ENCODE measurements at regions of chr16 and their contacts with region 1.

Region 1: GRCh38 chr16:46973207-46973995 is at the start of gene DNAJA2:
- DNase-seq: peak; percentile 86 to 97 (median 90)
- ATAC-seq: peak; percentile 90
- H3K4me3 ChIP-seq: peak within 1 kb of the TSS; percentile 86
- H3K4me3 Mint-ChIP-seq: peak within 1 kb of the TSS; percentile 93
- H3K27ac ChIP-seq: peak within 1 kb of the TSS; percentile 93 to 94
- H3K27ac Mint-ChIP-seq: peak within 1 kb of the TSS; percentile 91
- H3K4me1 ChIP-seq: peaks cover 48% of the 10 kb centered on the region
- H3K4me1 Mint-ChIP-seq: peaks cover 61% of the 10 kb centered on the region
- H3K27me3 ChIP-seq: no peaks in the 10 kb centered on the region
- H3K27me3 Mint-ChIP-seq: no peaks in the 10 kb centered on the region
- CTCF ChIP-seq: no peak
- total RNA-seq, gene DNAJA2: 80.8 to 81.4 TPM

Region 2: DNA sequence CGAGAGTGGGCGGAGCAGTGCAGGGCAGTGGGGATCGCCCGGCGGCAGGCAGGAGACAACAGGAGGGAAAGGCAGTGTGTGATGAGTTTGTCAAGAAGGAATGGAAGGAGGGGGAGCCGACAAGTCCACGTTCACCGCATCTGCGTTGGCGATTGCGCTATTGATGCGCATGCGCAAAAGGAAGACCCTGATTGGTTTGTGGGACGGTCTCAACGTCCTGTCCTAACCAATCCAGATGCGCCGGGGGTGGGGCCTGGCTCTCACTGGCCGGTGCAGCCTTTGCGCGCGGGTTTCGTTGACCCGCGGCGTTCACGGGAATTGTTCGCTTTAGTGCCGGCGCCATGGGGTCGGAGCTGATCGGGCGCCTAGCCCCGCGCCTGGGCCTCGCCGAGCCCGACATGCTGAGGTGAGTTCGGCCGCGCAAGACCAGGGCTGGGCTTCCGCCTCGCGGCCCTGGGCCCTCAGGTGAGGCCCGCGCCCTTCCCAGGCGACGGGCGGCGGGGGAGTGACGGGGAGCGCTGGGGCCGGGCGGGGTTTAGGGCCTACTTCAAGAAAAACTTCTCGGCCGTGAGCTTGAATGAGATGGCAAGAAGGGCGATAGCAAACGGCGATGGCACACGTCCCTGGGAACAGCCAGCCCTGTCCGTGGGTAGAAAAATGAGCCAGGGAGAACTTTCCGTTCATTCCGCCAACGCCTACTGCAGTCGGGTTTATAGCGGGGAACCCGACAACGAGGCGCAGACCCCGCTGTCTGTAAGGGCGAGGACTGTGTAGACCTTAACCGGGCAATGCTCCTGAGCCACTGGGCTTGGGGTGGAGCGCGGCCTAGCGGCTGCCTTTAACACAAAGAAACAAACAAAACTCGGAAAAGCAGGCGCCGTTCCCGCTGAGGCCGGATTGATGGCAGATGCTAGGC is 283.8 kb before region 1 on chr16 and contains the start of gene ORC6:
- CTCF ChIA-PET with region 1: no interaction called
- POLR2A ChIA-PET with region 1: no interaction called
- intact Hi-C with region 1: loop called (anchors 2 kb)
- DNase-seq: peak; percentile 92 to 97 (median 96)
- ATAC-seq: peak; percentile 72
- H3K4me3 ChIP-seq: peak within 1 kb of the TSS; percentile 94
- H3K4me3 Mint-ChIP-seq: no peak within 1 kb of the TSS
- H3K27ac ChIP-seq: peak within 1 kb of the TSS; percentile 91 to 98
- H3K27ac Mint-ChIP-seq: no peak within 1 kb of the TSS
- H3K4me1 ChIP-seq: peaks cover 23% of the 10 kb centered on the region
- H3K4me1 Mint-ChIP-seq: peaks cover 33% of the 10 kb centered on the region
- H3K27me3 ChIP-seq: no peaks in the 10 kb centered on the region
- H3K27me3 Mint-ChIP-seq: no peaks in the 10 kb centered on the region
- CTCF ChIP-seq: no peak
- total RNA-seq, gene ORC6: 3.7 to 3.8 TPM

Region 3: GRCh38 chr16:46830902-46831647 is 142.3 kb before region 1 on chr16 and contains the start of gene C16orf87:
- CTCF ChIA-PET with region 1: no interaction called
- POLR2A ChIA-PET with region 1: interaction called, 11 read pairs
- intact Hi-C with region 1: loop called (anchors 2 kb)
- DNase-seq: peak; percentile 81 to 96 (median 90)
- ATAC-seq: peak; percentile 91
- H3K4me3 ChIP-seq: peak within 1 kb of the TSS; percentile 87
- H3K4me3 Mint-ChIP-seq: peak within 1 kb of the TSS; percentile 98
- H3K27ac ChIP-seq: peak within 1 kb of the TSS; percentile 45 to 61
- H3K27ac Mint-ChIP-seq: peak within 1 kb of the TSS; percentile 89
- H3K4me1 ChIP-seq: peaks cover 11% of the 10 kb centered on the region
- H3K4me1 Mint-ChIP-seq: peaks cover 36% of the 10 kb centered on the region
- H3K27me3 ChIP-seq: no peaks in the 10 kb centered on the region
- H3K27me3 Mint-ChIP-seq: no peaks in the 10 kb centered on the region
- CTCF ChIP-seq: no peak
- total RNA-seq, gene C16orf87: 20.6 to 22.6 TPM

Region 4: DNA sequence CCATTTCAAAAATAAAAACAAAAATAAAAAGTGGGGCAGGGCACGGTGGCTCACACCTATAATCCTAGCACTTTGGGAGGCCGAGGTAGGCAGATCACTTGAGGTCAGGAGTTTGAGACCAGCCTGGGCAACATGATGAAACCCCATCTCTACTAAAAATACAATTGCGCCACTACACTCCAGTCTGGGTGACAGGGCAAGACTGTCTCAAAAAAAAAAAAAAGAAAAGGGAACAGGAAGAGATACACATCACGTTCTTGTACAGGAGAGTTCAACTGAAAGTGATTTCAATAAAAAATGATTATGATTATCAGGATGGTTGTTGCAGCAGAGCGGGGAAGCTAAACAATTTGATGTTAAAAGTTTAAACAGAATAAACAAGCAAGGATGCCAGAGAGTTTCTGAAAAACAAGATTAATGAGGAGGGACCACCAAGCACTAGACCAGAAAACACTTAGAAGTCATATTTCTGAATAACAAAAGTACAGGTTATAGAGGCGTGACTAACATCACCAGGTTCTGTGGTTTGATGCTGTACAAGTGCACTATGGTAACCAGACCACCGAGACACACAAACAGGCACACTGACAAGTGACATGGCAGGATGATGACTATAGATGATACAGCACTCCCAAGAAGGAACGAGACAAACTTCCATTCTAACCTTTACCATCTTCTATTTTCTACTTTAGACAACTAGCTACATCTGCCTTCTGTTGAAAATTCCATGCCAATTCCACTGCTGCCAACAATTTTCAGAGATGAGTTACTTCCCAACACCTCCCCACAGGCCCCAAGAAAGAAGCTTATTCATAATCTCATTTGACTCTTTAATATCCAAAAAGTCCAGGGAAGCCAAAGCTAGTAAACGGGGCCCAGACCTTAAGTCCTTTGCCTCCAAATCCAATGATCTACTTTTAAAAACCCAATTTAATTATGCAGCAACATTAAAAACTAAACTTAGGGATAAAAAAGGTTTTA is 11.7 kb before region 1 on chr16:
- CTCF ChIA-PET with region 1: interaction called, 4 read pairs
- POLR2A ChIA-PET with region 1: interaction called, 21 read pairs
- intact Hi-C with region 1: no loop called
- DNase-seq: peak in 3 of 14 experiments; percentile 43 to 58 (median 48)
- ATAC-seq: peak; percentile 84
- H3K4me3 ChIP-seq: no peak overlapping the region
- H3K4me3 Mint-ChIP-seq: no peak overlapping the region
- H3K27ac ChIP-seq: no peak overlapping the region
- H3K27ac Mint-ChIP-seq: peak overlapping the region; percentile 88
- H3K4me1 ChIP-seq: peaks cover 5% of the 10 kb centered on the region
- H3K4me1 Mint-ChIP-seq: peaks cover 33% of the 10 kb centered on the region
- H3K27me3 ChIP-seq: no peaks in the 10 kb centered on the region
- H3K27me3 Mint-ChIP-seq: no peaks in the 10 kb centered on the region
- CTCF ChIP-seq: no peak

Region 5: DNA sequence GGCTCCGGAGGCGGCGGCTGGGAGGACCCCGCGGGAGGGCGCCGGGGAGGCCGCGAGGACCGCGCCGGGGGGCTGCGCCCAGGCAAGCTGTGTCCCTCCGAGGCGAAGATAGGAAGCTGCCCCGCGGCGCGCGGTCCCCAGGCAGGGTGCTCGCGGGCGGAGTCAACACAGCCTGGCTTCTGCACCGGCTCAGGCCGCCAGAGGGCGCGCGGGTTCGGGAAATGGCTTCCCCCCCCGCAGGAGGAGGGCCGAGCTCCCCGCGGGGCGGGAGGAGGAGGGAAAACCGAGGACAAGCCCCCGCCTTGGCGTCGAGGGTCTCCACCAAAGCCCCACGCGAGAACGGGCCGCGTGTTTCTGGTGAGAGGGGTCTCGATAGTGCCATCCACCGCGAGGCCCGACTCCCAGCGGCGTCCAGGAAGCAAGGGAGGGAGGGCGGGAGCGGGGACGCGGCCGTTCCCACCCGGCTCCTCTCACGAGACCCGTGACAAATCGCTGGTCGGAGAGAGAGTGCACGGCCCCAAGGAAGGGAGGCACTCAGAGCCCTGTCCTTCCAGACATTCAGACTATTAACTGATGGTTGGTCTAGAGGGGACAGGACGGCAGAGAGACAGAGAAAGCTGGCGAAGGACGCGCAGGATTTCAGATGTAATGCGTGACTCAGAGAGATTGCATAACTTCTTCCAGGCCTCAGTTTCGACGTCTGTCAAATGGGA is 64.5 kb after region 1 on chr16:
- CTCF ChIA-PET with region 1: interaction called, 24 read pairs
- POLR2A ChIA-PET with region 1: interaction called, 28 read pairs
- intact Hi-C with region 1: loop called in 1 of 2 experiments (anchors 2 kb)
- DNase-seq: peak; percentile 76 to 94 (median 88)
- ATAC-seq: peak; percentile 97
- H3K4me3 ChIP-seq: peak overlapping the region; percentile 74
- H3K4me3 Mint-ChIP-seq: peak overlapping the region; percentile 67
- H3K27ac ChIP-seq: no peak overlapping the region
- H3K27ac Mint-ChIP-seq: no peak overlapping the region
- H3K4me1 ChIP-seq: peaks cover 13% of the 10 kb centered on the region
- H3K4me1 Mint-ChIP-seq: no peaks in the 10 kb centered on the region
- H3K27me3 ChIP-seq: no peaks in the 10 kb centered on the region
- H3K27me3 Mint-ChIP-seq: no peaks in the 10 kb centered on the region
- CTCF ChIP-seq: peak; percentile 93

Region 6: DNA sequence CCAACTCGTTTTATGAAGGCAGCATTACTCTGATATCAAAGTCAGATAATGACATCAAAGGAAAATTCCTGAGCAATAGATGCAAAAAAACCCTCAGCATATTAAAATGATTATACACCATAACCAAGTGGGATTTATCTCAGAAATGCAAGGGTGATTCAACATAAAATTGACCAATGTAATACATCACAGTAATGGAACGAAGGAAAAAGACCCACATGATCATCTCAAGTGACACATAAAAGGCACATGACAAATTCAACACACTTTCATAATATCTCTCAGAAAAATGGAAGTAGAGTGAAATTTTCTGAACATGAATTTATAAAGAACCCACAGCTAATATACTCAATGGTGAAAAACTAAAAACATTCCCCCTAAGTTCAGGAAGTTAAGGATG is 368.7 kb after region 1 on chr16:
- CTCF ChIA-PET with region 1: no interaction called
- POLR2A ChIA-PET with region 1: no interaction called
- intact Hi-C with region 1: no loop called
- DNase-seq: no peak
- ATAC-seq: no peak
- H3K4me3 ChIP-seq: no peak overlapping the region
- H3K4me3 Mint-ChIP-seq: no peak overlapping the region
- H3K27ac ChIP-seq: no peak overlapping the region
- H3K27ac Mint-ChIP-seq: no peak overlapping the region
- H3K4me1 ChIP-seq: no peaks in the 10 kb centered on the region
- H3K4me1 Mint-ChIP-seq: peaks cover 8% of the 10 kb centered on the region
- H3K27me3 ChIP-seq: no peaks in the 10 kb centered on the region
- H3K27me3 Mint-ChIP-seq: no peaks in the 10 kb centered on the region
- CTCF ChIP-seq: no peak

Region 7: DNA sequence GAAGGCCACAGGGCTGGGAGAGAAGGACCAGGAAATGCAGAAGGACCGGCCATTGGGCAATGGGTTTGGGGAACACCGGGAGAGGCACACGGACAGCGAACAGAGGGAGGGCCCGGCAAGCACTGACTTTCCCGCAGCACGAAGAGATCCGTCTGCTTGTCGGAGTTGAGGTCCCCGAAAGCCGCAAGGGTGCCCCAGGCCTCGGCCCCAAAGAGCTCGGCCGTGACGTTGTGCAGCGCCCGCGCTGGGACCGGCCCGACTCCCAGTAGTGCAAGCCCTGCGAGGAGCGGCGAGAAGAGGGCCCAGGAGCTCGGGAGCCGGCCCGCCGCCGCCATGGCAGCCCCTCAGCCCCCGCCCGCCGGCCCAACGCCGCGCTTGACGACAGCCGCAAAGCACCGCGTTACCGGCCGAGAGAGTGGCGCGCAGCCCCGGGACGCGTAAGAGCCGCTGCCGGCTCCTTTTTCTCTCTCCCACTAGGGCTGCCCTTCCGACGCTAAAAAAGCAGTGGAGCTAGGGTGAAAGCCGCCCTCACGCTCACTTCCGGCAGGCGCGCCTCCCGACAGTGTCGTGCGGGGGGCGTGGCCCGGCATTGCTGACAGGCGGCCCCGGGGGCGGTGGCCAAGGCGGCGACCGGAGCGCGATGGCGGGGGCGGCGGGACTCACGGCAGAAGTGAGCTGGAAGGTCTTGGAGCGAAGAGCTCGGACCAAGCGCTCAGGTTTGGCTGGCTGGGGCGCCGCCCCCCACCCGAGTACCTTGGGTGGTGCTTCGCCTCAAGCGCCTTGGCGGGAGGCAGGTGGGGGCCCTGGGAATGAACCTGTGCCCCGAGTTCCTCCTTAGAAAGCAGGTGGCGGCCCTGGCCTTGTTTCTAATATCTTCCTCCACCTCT is 487.6 kb after region 1 on chr16 and contains the starts of genes ITFG1 and PHKB:
- CTCF ChIA-PET with region 1: no interaction called
- POLR2A ChIA-PET with region 1: interaction called, 27 read pairs
- intact Hi-C with region 1: loop called in 1 of 2 experiments (anchors 5 kb)
- DNase-seq: peak; percentile 89 to 98 (median 94)
- ATAC-seq: peak; percentile 96
- H3K4me3 ChIP-seq: peak within 1 kb of the TSS; percentile 79
- H3K4me3 Mint-ChIP-seq: peak within 1 kb of the TSS; percentile 89
- H3K27ac ChIP-seq: peak within 1 kb of the TSS; percentile 87 to 93
- H3K27ac Mint-ChIP-seq: peak within 1 kb of the TSS; percentile 87
- H3K4me1 ChIP-seq: peaks cover 26% of the 10 kb centered on the region
- H3K4me1 Mint-ChIP-seq: peaks cover 70% of the 10 kb centered on the region
- H3K27me3 ChIP-seq: no peaks in the 10 kb centered on the region
- H3K27me3 Mint-ChIP-seq: no peaks in the 10 kb centered on the region
- CTCF ChIP-seq: no peak
- total RNA-seq, gene ITFG1: 18.0 to 18.5 TPM
- total RNA-seq, gene PHKB: 28.8 to 31.3 TPM

Region 8: DNA sequence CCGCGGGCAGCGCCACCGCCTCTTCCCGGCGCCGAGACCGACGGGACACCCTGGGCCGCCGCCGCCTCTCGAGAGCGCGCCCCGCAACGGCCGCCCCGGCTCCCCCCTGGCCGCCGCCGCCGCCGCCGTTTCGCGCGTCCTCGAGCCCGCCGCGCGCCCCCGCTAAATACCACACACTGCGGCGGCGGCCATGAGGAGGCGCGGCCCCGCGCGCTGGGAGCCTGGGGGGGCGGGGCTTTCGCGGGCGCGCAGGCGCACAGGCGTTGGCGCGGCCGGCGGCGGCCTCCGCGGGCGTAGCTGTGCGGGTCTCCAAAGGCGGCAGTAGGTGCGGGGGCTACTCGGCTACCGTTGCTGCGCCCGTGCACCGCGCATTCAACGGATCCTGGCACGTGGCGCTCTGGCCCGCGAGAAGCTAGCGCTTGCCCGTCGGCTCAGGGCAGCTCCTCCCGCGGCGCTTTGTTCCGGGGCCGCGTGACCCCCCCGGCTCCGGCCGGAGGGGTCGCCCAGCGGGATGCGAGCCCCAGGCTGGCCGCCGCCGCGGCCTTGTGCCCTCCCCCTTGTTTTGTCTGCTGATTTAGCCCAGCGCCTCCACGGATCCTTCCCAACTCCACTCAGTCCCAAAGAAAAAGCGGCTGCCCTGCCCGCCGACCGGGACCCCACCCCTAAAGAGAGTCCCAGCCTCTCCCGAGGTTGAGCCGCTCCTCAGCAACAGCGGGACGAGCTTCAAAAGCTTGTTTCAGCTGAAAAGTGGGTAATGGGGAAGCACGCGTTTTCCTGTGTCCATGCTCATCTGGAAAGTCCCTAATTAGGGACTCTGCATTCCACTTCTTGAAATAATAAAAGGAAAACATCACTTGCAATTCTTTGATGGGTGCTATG is 1412.1 kb after region 1 on chr16 and contains the start of gene SIAH1:
- CTCF ChIA-PET with region 1: no interaction called
- POLR2A ChIA-PET with region 1: interaction called, 3 read pairs
- intact Hi-C with region 1: loop called in 1 of 2 experiments (anchors 5 kb)
- DNase-seq: peak; percentile 73 to 96 (median 86)
- ATAC-seq: peak; percentile 80
- H3K4me3 ChIP-seq: peak within 1 kb of the TSS; percentile 81
- H3K4me3 Mint-ChIP-seq: peak within 1 kb of the TSS; percentile 98
- H3K27ac ChIP-seq: peak within 1 kb of the TSS in 1 of 2 donors; percentile 46
- H3K27ac Mint-ChIP-seq: peak within 1 kb of the TSS; percentile 92
- H3K4me1 ChIP-seq: peaks cover 12% of the 10 kb centered on the region
- H3K4me1 Mint-ChIP-seq: peaks cover 27% of the 10 kb centered on the region
- H3K27me3 ChIP-seq: no peaks in the 10 kb centered on the region
- H3K27me3 Mint-ChIP-seq: no peaks in the 10 kb centered on the region
- CTCF ChIP-seq: no peak
- total RNA-seq, gene SIAH1: 40.9 to 43.0 TPM

Measured in CD4-positive, alpha-beta T cell (primary cell).